Mammary epithelial cell (primary cell): ENCODE measurements at regions of chr11 and their contacts with region 1.

Region 1: DNA sequence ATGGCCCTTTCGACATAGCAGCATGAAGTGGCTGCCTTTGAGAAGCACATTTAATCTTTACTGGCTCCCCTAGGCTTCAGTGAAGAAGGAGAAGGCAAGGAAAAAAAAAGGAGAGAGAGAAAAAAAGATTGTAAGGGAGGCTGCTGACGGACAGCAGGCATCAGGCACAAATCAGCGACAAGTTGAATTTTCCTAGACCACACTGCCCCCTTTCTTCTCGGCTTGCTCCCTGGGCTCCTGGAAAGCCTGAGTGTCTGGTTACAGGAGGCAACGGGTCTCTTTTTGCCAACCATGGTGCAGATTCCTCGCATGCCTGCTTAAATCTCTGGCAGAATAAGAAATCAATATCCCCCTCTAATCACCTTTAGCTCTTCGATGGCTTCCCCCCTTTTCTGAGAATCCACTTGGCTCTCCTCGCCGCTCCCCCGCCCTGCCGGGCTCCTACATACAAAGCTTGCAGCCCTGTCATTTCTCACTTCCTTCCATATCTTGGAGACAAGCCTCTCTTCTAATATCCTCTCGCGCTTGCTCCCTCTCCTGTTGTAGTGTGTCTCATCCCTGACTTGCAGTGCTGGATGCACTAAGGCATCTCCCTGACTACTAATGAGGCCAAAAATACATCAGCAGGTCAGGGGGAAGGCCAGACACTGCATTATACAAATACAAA is 14.3 kb downstream of the BLID start:
- DNase-seq: peak; percentile 71
- H3K4me3 ChIP-seq: peak overlapping the region; percentile 52 to 83 (median 72)
- H3K27ac ChIP-seq: peak overlapping the region; percentile 67
- H3K4me1 ChIP-seq: peaks cover 54% of the 10 kb centered on the region
- H3K27me3 ChIP-seq: no peaks in the 10 kb centered on the region
- CTCF ChIP-seq: peak; percentile 39 to 71

Region 2: GRCh38 chr11:121655537-121656327 is 446.0 kb before region 1 on chr11:
- CTCF ChIA-PET with region 1: interaction called, 13 read pairs
- dilution Hi-C with region 1: loop called (anchors 10 kb)
- in situ Hi-C with region 1: loop called (anchors 5 to 10 kb)
- intact Hi-C with region 1: loop called (anchors 1 kb)
- DNase-seq: peak; percentile 73
- H3K4me3 ChIP-seq: peak overlapping the region; percentile 45 to 59 (median 56)
- H3K27ac ChIP-seq: peak overlapping the region; percentile 58
- H3K4me1 ChIP-seq: peaks cover 20% of the 10 kb centered on the region
- H3K27me3 ChIP-seq: no peaks in the 10 kb centered on the region
- CTCF ChIP-seq: peak; percentile 77 to 97

Region 3: DNA sequence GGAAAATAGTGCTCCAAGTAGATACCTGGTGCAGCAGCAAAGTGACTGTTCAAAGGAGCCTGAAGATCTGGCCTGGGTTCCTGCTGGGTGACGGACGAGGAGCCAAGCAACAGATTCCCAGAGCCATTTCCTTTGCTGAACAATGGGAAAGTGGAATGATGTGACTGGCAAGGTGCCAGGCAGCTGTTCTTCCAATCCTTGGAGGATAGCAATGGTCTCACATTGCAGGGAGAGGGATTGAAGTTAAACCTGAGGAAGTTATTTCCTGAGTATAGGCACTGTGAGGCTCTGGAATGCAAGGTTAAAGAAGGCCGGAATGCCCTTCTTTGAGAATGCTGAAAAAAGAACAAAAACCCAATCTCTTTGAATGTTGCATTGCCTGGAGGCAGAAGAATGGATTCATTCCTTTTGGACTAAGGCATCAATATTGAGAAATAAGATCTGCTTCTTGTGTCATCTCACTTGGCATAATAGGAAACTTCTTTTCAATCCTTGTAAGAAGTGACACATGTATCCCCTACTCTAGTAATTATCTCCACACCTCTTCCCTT is 209.6 kb before region 1 on chr11:
- CTCF ChIA-PET with region 1: no interaction called
- dilution Hi-C with region 1: loop called (anchors 5 kb)
- in situ Hi-C with region 1: no loop called
- intact Hi-C with region 1: loop called (anchors 5 kb)
- DNase-seq: peak; percentile 51
- H3K4me3 ChIP-seq: no peak overlapping the region
- H3K27ac ChIP-seq: no peak overlapping the region
- H3K4me1 ChIP-seq: peaks cover 73% of the 10 kb centered on the region
- H3K27me3 ChIP-seq: peaks cover 4% of the 10 kb centered on the region
- CTCF ChIP-seq: no peak

Region 4: GRCh38 chr11:121996574-121996973 is 105.2 kb before region 1 on chr11:
- CTCF ChIA-PET with region 1: no interaction called
- dilution Hi-C with region 1: no loop called
- in situ Hi-C with region 1: no loop called
- intact Hi-C with region 1: no loop called
- DNase-seq: no peak
- H3K4me3 ChIP-seq: no peak overlapping the region
- H3K27ac ChIP-seq: no peak overlapping the region
- H3K4me1 ChIP-seq: no peaks in the 10 kb centered on the region
- H3K27me3 ChIP-seq: no peaks in the 10 kb centered on the region
- CTCF ChIP-seq: no peak

Region 5: GRCh38 chr11:122045181-122045586 is 56.6 kb before region 1 on chr11:
- CTCF ChIA-PET with region 1: interaction called, 21 read pairs
- dilution Hi-C with region 1: no loop called
- in situ Hi-C with region 1: no loop called
- intact Hi-C with region 1: loop called (anchors 2 kb)
- DNase-seq: peak; percentile 93
- H3K4me3 ChIP-seq: no peak overlapping the region
- H3K27ac ChIP-seq: peak overlapping the region; percentile 67
- H3K4me1 ChIP-seq: peaks cover 27% of the 10 kb centered on the region
- H3K27me3 ChIP-seq: no peaks in the 10 kb centered on the region
- CTCF ChIP-seq: no peak

Region 6: GRCh38 chr11:122115524-122116379 is 14.0 kb after region 1 on chr11 and contains the start of gene BLID:
- CTCF ChIA-PET with region 1: no interaction called
- dilution Hi-C with region 1: no loop called
- in situ Hi-C with region 1: no loop called
- intact Hi-C with region 1: no loop called
- DNase-seq: no peak
- H3K4me3 ChIP-seq: no peak within 1 kb of the TSS
- H3K27ac ChIP-seq: no peak within 1 kb of the TSS
- H3K4me1 ChIP-seq: no peaks in the 10 kb centered on the region
- H3K27me3 ChIP-seq: no peaks in the 10 kb centered on the region
- CTCF ChIP-seq: peak; percentile 79 to 81
- total RNA-seq, gene BLID: 5.2 to 5.6 TPM

Region 7: GRCh38 chr11:122170815-122171475 is 69.2 kb after region 1 on chr11:
- CTCF ChIA-PET with region 1: no interaction called
- dilution Hi-C with region 1: loop called (anchors 5 kb)
- in situ Hi-C with region 1: no loop called
- intact Hi-C with region 1: no loop called
- DNase-seq: peak; percentile 91
- H3K4me3 ChIP-seq: no peak overlapping the region
- H3K27ac ChIP-seq: peak overlapping the region; percentile 95
- H3K4me1 ChIP-seq: peaks cover 73% of the 10 kb centered on the region
- H3K27me3 ChIP-seq: no peaks in the 10 kb centered on the region
- CTCF ChIP-seq: no peak

Region 8: GRCh38 chr11:122505304-122506006 is 403.7 kb after region 1 on chr11:
- CTCF ChIA-PET with region 1: no interaction called
- dilution Hi-C with region 1: no loop called
- in situ Hi-C with region 1: loop called (anchors 25 kb)
- intact Hi-C with region 1: loop called (anchors 1 kb)
- DNase-seq: peak; percentile 84
- H3K4me3 ChIP-seq: no peak overlapping the region
- H3K27ac ChIP-seq: no peak overlapping the region
- H3K4me1 ChIP-seq: no peaks in the 10 kb centered on the region
- H3K27me3 ChIP-seq: peaks cover 2% of the 10 kb centered on the region
- CTCF ChIP-seq: peak; percentile 93 to 97